PC-3 (cell line): ENCODE measurements at regions of chr7 and their contacts with region 1.

Region 1: DNA sequence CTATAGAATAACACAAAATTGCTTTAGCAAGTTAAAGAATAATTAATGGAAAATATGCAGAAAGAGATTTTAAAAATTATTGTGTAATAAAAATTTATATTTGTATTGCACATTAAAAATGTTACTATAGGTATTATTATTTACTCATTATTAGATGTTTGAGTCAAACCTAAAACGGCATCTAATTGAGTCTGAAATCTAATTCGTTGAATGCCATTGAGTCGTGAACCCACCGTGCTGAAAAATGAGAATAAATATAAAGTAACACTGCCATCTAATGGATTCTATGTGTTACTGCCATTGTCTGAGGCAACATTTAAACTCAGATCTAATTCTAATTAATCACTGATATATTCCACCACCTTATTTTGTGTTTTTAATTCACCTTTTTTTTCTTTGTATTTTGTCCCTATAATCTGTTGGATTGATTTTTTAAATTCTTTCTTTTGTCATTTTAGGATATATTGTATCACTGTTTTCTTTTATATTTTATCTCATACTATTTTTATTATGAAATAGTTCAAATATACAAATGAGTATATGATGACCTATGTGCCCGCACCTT is 62.2 kb downstream of the SAMD9 start:
- DNase-seq: peak; percentile 63
- ATAC-seq: peak; percentile 45; the same call in 1 of the 2 replicates
- H3K4me3 ChIP-seq: no peak overlapping the region
- H3K27ac ChIP-seq: no peak overlapping the region
- H3K4me1 ChIP-seq: peaks cover 4% of the 10 kb centered on the region; the same call in 1 of the 2 replicates
- H3K27me3 ChIP-seq: no peaks in the 10 kb centered on the region
- CTCF ChIP-seq: peak; percentile 72

Region 2: GRCh38 chr7:92691578-92691977 is 364.0 kb before region 1 on chr7:
- CTCF ChIA-PET with region 1: no interaction called
- POLR2A ChIA-PET with region 1: no interaction called
- intact Hi-C with region 1: loop called (anchors 1 kb)
- DNase-seq: peak; percentile 81
- ATAC-seq: peak; percentile 77
- H3K4me3 ChIP-seq: no peak overlapping the region
- H3K27ac ChIP-seq: no peak overlapping the region
- H3K4me1 ChIP-seq: peaks cover 14% of the 10 kb centered on the region
- H3K27me3 ChIP-seq: no peaks in the 10 kb centered on the region
- CTCF ChIP-seq: peak; percentile 81

Region 3: DNA sequence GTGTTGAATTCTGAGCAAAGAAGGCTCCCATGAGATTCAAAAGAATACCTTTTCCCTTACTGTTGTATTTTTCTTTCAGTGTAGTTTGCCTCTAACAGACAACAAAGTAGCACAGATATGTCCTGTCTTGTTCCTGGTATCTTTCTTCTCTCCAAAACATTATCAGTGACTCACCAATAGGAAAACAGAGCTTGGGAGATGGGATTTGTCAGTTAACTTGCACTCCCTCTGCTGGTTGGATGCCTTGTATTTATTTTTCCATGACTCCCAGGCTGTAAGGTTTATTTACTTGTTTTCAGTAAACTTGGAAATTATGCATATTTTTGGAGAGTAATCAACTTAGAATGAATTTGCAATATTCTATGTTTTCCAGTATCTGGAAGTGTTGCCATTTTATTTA is 67.6 kb before region 1 on chr7:
- CTCF ChIA-PET with region 1: no interaction called
- POLR2A ChIA-PET with region 1: interaction called, 6 read pairs
- intact Hi-C with region 1: loop called (anchors 2 kb)
- DNase-seq: peak; percentile 51
- ATAC-seq: peak; percentile 49
- H3K4me3 ChIP-seq: no peak overlapping the region
- H3K27ac ChIP-seq: no peak overlapping the region
- H3K4me1 ChIP-seq: no peaks in the 10 kb centered on the region
- H3K27me3 ChIP-seq: no peaks in the 10 kb centered on the region
- CTCF ChIP-seq: peak; percentile 75

Region 4: GRCh38 chr7:93015779-93016481 is 39.7 kb before region 1 on chr7:
- CTCF ChIA-PET with region 1: no interaction called
- POLR2A ChIA-PET with region 1: no interaction called
- intact Hi-C with region 1: loop called (anchors 5 kb)
- DNase-seq: no peak
- ATAC-seq: no peak
- H3K4me3 ChIP-seq: no peak overlapping the region
- H3K27ac ChIP-seq: peak overlapping the region; percentile 37
- H3K4me1 ChIP-seq: peaks cover 38% of the 10 kb centered on the region
- H3K27me3 ChIP-seq: no peaks in the 10 kb centered on the region
- CTCF ChIP-seq: no peak